ENCODE measurements at regions of chr7 and their contacts with region 1.

Region 1: DNA sequence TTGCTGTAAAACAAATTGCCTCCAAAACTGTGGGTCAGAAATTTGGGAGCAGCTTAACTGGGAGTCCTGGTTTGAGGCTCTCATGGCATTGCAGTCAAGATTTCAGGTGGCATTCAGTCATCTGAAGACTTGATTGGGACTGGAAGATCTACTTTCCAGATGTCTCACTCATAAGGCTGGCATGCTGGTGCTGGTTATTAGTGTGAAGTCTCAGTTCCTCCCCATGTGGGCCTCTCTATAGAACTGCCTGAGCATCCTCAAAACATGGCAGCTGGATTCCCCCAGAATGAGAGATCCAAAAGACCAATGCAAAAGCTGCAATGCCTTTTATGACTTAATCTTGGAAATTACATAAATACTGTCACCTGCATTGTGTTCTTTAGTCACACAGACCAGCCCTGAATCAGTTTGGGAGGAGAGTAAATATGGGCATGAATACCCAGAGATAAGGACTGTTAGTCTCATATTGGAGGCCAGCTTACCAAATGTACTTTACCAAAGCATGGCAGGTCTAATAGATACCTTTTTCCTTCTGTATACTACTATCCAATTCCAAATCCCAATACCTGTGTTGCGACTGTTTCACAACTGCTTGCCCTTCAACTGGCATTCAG is 6.5 kb upstream of the HERPUD2 start:
- DNase-seq: no peak
- ATAC-seq: no peak
- H3K4me3 ChIP-seq: no peak overlapping the region
- H3K27ac ChIP-seq: no peak overlapping the region
- H3K4me1 ChIP-seq: peaks cover 0 to 16% (median 0%) of the 10 kb centered on the region in 9 donors
- H3K27me3 ChIP-seq: no peaks in the 10 kb centered on the region
- CTCF ChIP-seq: no peak

Region 2: DNA sequence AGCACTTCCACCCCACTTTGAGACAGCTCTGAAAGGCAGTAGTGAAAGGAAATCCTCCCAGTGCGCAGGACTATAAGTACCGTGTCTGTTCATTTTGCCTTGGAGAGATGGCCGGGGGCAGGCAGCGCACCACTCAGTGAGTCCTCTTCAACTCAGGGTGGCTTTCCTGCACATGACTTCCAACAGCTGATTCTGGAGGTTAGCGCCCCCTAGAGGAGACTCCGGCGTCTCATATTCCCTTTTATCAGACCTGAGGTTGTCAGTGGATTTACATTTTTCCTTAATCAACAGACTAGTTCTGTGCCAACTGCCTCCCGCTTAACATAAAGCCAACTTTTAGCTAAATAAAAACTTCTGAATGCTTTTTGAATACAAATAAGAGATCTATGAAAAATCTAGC is 107.5 kb before region 1 on chr7:
- intact Hi-C with region 1: no loop called
- DNase-seq: no peak
- ATAC-seq: no peak
- H3K4me3 ChIP-seq: no peak overlapping the region
- H3K27ac ChIP-seq: no peak overlapping the region
- H3K4me1 ChIP-seq: peaks cover 0 to 17% (median 11%) of the 10 kb centered on the region in 9 donors
- H3K27me3 ChIP-seq: no peaks in the 10 kb centered on the region
- CTCF ChIP-seq: peak in 3 of 9 donors; percentile 12 to 21 (median 14)

Region 3: GRCh38 chr7:35975851-35976454 is 274.6 kb after region 1 on chr7:
- intact Hi-C with region 1: loop called in 2 of 10 experiments (anchors 10 kb)
- DNase-seq: peak in 1 of 2 donors; percentile 62
- ATAC-seq: peak in 7 of 8 donors; percentile 47 to 81 (median 75)
- H3K4me3 ChIP-seq: no peak overlapping the region
- H3K27ac ChIP-seq: no peak overlapping the region
- H3K4me1 ChIP-seq: no peaks in the 10 kb centered on the region
- H3K27me3 ChIP-seq: peaks cover 0 to 24% (median 3%) of the 10 kb centered on the region in 7 donors
- CTCF ChIP-seq: peak; percentile 68 to 90 (median 82)

Measured in heart right ventricle (tissue), 16 donors.